Right cardiac atrium (tissue), 5 donors: ENCODE measurements at regions of chr22 and their contacts with region 1.

Region 1: GRCh38 chr22:26172389-26172990 is 3.2 kb downstream of the SEZ6L start:
- DNase-seq: peak in 2 of 3 donors; percentile 16 to 38
- ATAC-seq: no peak
- H3K4me3 ChIP-seq: no peak overlapping the region
- H3K27ac ChIP-seq: no peak overlapping the region
- H3K4me1 ChIP-seq: peaks cover 3% of the 10 kb centered on the region
- H3K27me3 ChIP-seq: no peaks in the 10 kb centered on the region

Region 2: GRCh38 chr22:26079009-26079738 is 93.3 kb before region 1 on chr22:
- intact Hi-C with region 1: no loop called
- DNase-seq: no peak
- ATAC-seq: no peak
- H3K4me3 ChIP-seq: no peak overlapping the region
- H3K27ac ChIP-seq: no peak overlapping the region
- H3K4me1 ChIP-seq: no peaks in the 10 kb centered on the region
- H3K27me3 ChIP-seq: no peaks in the 10 kb centered on the region

Region 3: DNA sequence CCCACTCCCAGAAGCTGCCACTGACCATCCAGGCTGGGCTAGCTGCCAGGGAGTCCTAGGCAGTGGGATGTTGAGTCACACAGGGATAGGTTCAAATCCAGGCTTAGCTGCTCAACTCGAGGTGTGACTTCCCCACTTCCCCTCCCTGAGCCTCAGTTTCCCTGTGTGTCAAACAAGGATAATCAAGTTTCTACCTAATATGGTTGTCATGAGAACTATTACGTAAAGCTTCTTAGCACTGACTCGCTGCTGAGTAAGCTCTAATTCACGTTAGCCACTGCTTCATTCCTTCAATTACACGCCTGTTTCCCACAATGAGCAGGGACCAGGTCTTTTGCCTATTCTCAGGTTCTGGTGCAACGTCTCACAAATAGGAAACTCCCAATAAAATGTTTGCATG is 64.5 kb after region 1 on chr22:
- intact Hi-C with region 1: loop called in 1 of 4 experiments (anchors 10 kb)
- DNase-seq: no peak
- ATAC-seq: no peak
- H3K4me3 ChIP-seq: no peak overlapping the region
- H3K27ac ChIP-seq: no peak overlapping the region
- H3K4me1 ChIP-seq: no peaks in the 10 kb centered on the region
- H3K27me3 ChIP-seq: no peaks in the 10 kb centered on the region

Region 4: DNA sequence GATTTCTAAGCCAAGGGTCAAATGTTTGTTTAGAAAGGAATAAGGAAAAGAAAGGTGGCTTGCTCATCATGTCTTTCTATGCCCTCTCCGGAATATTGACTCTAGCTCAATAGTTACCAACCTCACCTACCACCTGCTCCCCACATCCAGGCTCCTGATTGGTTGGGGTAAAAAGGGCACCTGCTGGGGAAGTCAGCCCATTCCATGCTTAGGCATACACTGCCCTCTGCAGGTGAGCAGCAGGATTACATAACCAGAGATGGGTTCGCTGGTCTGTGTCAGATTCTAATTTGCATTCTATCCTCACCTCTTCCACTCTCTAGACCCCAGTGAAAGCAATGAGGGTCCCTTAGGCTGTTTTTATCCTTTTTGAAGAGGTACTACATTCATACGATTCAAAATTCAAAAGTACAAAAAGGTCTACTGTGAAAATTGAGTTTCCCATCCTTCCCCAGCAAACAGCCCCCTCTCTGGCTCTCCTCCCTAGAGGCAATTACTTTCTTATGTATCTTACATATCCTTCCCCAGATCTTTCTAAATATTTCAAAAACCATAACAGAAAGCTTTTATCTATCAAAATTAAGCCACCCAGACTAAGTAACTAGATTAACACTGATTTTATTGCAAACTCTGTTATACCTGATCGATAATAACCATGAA is 158.6 kb after region 1 on chr22:
- intact Hi-C with region 1: loop called in 1 of 4 experiments (anchors 5 kb)
- DNase-seq: no peak
- ATAC-seq: peak; percentile 33 to 67
- H3K4me3 ChIP-seq: no peak overlapping the region
- H3K27ac ChIP-seq: no peak overlapping the region
- H3K4me1 ChIP-seq: no peaks in the 10 kb centered on the region
- H3K27me3 ChIP-seq: no peaks in the 10 kb centered on the region